Stomach (tissue), 19 donors: ENCODE measurements at regions of chr10 and their contacts with region 1.

Region 1: GRCh38 chr10:70549962-70550458 is 52.5 kb downstream of the PRF1 start:
- DNase-seq: peak; percentile 77 to 87
- H3K4me3 ChIP-seq: no peak overlapping the region
- H3K27ac ChIP-seq: peak overlapping the region in 1 of 5 donors; percentile 2
- H3K4me1 ChIP-seq: peaks cover 0 to 21% (median 3%) of the 10 kb centered on the region in 4 donors
- H3K27me3 ChIP-seq: no peaks in the 10 kb centered on the region
- CTCF ChIP-seq: peak in 5 of 7 experiments; percentile 82 to 91 (median 90)
- EP300 ChIP-seq: no peak
- POLR2A ChIP-seq: no peak

Region 2: DNA sequence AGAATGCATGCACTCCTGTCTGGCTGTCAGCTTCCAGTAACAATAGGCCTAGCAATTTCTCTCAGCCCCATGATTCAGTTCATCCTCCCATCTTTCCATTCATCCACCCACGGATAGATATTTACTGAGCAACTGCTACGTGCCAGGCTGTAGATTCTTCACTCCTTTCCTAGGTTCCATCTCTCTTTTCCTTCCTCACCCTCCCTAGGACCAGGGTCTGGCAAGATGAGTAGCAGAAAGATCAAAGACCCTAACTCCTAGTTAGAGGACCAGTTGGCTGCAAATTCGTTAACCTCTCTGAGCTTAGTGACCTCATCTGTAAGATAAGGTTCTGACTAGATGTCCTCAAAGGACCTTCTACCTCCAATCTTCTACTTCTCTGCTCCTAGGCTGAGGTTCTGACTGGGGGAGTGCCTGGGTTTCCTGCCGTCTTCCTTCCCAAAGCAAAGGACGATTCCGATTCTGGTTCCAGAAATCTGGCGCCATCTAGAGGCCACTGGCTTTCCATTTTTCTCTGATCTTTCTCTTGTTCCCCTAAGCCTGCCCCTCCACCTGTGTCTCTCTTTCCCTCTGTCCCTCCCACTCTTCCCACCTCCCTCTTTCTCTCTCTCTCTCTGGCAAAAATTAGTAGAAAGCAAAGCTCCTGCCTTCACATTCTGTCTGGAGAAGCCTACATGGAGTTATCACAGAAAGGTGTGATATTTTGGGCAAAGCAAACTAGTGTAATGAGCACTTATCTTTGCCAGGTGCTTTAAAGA is 208.9 kb after region 1 on chr10:
- intact Hi-C with region 1: loop called (anchors 5 kb)
- DNase-seq: peak; percentile 74 to 92
- H3K4me3 ChIP-seq: no peak overlapping the region
- H3K27ac ChIP-seq: no peak overlapping the region
- H3K4me1 ChIP-seq: peaks cover 0 to 5% (median 2%) of the 10 kb centered on the region in 4 donors
- H3K27me3 ChIP-seq: peaks cover 0 to 9% (median 0%) of the 10 kb centered on the region in 3 donors
- CTCF ChIP-seq: peak in 5 of 7 experiments; percentile 32 to 75 (median 56)
- EP300 ChIP-seq: no peak
- POLR2A ChIP-seq: no peak

Region 3: DNA sequence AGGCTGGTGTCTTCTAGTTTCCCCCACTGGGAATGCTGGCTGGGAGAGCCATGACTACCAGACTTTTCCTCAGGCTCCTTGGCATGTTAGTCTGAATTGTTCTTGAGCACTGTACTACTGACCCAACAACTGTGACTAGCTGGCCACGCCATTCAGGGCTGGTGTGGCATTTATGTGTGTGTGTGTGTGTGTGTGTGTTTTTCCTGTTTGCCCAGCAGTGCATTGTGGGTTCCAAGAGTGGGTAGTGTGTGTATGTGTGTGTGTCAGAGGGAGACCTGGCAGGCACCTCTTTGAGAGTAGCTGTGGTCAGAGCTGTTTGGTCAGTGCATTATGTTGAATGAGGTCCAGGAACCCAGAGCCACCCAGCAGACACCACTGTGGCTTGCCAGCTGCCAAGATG is 329.2 kb after region 1 on chr10:
- intact Hi-C with region 1: loop called (anchors 10 kb)
- DNase-seq: peak in 1 of 2 donors; percentile 42
- H3K4me3 ChIP-seq: no peak overlapping the region
- H3K27ac ChIP-seq: no peak overlapping the region
- H3K4me1 ChIP-seq: peaks cover 0 to 17% (median 0%) of the 10 kb centered on the region in 4 donors
- H3K27me3 ChIP-seq: no peaks in the 10 kb centered on the region
- CTCF ChIP-seq: no peak
- EP300 ChIP-seq: no peak
- POLR2A ChIP-seq: no peak